CD4-positive, alpha-beta T cell (primary cell): ENCODE measurements at regions of chr6 and their contacts with region 1.

Region 1: DNA sequence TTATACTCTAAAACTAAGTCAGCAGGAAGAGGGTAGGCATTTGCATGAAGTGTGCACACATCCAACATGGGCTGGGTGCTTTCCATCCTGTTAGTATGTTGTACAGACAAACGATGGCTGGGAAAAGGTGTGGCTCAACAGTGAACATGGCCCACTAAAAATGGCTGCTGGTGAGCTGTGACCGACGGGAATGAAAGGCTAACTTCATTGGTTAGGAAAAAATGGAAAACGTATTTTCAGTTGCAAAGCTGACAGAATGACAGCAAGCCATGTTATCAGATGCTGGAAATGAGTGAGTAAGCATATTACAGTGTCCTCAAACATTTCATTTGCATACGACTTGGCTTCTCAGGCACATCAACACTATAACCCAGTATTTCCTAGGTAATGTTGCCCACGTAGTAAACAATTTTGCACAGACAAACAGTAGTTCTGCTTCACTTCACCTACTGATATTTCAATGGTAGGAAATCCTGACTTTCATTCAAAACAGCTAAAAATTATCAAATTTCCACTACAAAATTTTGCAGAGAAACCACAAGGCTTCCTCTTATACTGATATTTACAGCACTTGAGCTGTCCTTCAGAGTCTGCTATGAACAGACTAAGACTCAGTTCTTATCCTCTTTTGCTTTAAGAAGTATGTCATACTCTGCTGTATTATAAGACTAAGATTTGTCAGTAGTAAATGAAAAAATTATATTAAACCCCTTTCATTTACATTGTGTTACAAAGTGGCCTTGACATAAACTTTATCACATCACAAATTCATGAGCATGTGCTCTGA is 98.9 kb downstream of the IRF4 start:
- DNase-seq: peak in 2 of 14 experiments; percentile 25 to 32
- ATAC-seq: peak; percentile 48
- H3K4me3 ChIP-seq: no peak overlapping the region
- H3K4me3 Mint-ChIP-seq: peak overlapping the region; percentile 66
- H3K27ac ChIP-seq: no peak overlapping the region
- H3K27ac Mint-ChIP-seq: peak overlapping the region; percentile 83
- H3K4me1 ChIP-seq: peaks cover 37% of the 10 kb centered on the region
- H3K4me1 Mint-ChIP-seq: peaks cover 65% of the 10 kb centered on the region
- H3K27me3 ChIP-seq: no peaks in the 10 kb centered on the region
- H3K27me3 Mint-ChIP-seq: no peaks in the 10 kb centered on the region
- CTCF ChIP-seq: no peak

Region 2: GRCh38 chr6:347232-347631 is 143.2 kb before region 1 on chr6:
- CTCF ChIA-PET with region 1: no interaction called
- POLR2A ChIA-PET with region 1: no interaction called
- intact Hi-C with region 1: no loop called
- DNase-seq: no peak
- ATAC-seq: no peak
- H3K4me3 ChIP-seq: no peak overlapping the region
- H3K4me3 Mint-ChIP-seq: no peak overlapping the region
- H3K27ac ChIP-seq: no peak overlapping the region
- H3K27ac Mint-ChIP-seq: no peak overlapping the region
- H3K4me1 ChIP-seq: no peaks in the 10 kb centered on the region
- H3K4me1 Mint-ChIP-seq: no peaks in the 10 kb centered on the region
- H3K27me3 ChIP-seq: no peaks in the 10 kb centered on the region
- H3K27me3 Mint-ChIP-seq: no peaks in the 10 kb centered on the region
- CTCF ChIP-seq: no peak

Region 3: DNA sequence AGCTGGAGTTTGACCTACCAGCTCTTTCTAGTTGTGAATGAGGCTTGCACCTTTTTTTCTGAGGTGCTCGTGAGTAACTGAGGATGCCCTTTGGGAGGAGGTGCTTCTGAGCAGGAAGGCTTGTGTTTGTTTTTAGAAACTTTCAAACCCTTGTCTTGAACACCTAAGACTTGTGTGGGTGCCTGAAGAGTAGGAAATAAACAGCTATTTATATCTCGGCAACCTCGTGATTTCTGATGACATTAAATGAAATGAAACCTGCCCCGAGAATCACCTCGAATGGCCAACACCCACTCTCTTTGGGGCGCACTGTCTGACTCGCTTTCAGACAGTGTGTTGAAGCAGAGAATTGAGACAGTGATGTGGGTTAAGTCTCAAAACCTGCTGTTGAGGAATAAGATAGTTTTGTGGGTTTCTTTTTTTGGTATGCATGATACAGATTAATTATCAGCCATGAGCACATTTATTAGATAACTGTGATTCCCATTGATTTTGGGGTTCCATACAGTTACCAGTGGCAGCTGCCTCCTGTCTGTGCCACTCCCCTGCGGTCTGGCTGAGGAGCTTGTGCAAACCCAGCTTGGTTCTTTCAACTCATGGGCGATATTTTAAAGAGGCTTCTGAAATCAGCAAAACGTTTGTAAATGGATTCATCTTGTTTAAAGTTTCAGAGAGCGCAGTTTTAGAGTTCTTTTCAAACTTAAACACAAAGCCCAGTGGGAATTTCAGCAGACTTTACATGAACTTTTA is 90.5 kb before region 1 on chr6:
- CTCF ChIA-PET with region 1: no interaction called
- POLR2A ChIA-PET with region 1: interaction called, 4 read pairs
- intact Hi-C with region 1: loop called in 1 of 2 experiments (anchors 5 kb)
- DNase-seq: peak in 8 of 14 experiments; percentile 18 to 59 (median 46)
- ATAC-seq: peak; percentile 80
- H3K4me3 ChIP-seq: no peak overlapping the region
- H3K4me3 Mint-ChIP-seq: peak overlapping the region; percentile 76
- H3K27ac ChIP-seq: no peak overlapping the region
- H3K27ac Mint-ChIP-seq: peak overlapping the region; percentile 87
- H3K4me1 ChIP-seq: peaks cover 50% of the 10 kb centered on the region
- H3K4me1 Mint-ChIP-seq: peaks cover 55% of the 10 kb centered on the region
- H3K27me3 ChIP-seq: no peaks in the 10 kb centered on the region
- H3K27me3 Mint-ChIP-seq: no peaks in the 10 kb centered on the region
- CTCF ChIP-seq: no peak

Region 4: GRCh38 chr6:474453-475185 is 15.8 kb before region 1 on chr6:
- CTCF ChIA-PET with region 1: no interaction called
- POLR2A ChIA-PET with region 1: interaction called, 26 read pairs
- intact Hi-C with region 1: no loop called
- DNase-seq: peak; percentile 42 to 90 (median 68)
- ATAC-seq: peak; percentile 100
- H3K4me3 ChIP-seq: peak overlapping the region; percentile 12
- H3K4me3 Mint-ChIP-seq: peak overlapping the region; percentile 39
- H3K27ac ChIP-seq: no peak overlapping the region
- H3K27ac Mint-ChIP-seq: no peak overlapping the region
- H3K4me1 ChIP-seq: peaks cover 24% of the 10 kb centered on the region
- H3K4me1 Mint-ChIP-seq: peaks cover 53% of the 10 kb centered on the region
- H3K27me3 ChIP-seq: no peaks in the 10 kb centered on the region
- H3K27me3 Mint-ChIP-seq: no peaks in the 10 kb centered on the region
- CTCF ChIP-seq: no peak